GM10248 (cell line): ENCODE measurements at regions of chr1 and their contacts with region 1.

Region 1: DNA sequence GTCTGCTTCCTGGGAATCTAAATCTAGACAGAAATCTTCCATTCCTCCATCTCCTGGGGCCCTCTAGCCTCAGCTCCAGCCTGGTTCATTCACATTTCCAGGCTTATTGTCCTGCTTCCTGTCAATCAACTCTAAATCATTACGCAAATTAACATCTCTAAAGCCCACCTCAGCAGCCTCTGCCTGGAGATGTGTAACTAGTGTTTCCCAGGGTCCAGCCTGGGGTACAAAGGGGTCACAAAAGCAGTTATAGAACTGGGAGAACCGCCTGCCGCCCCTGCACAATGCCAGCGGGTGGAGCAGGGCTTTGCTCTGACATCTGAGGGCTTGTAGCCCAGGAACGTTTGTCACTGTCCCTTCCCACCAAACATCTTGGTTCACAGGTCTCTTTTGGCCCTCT is 373.5 kb downstream of the RRAGC start:
- DNase-seq: no peak
- CTCF ChIP-seq: no peak

Region 2: GRCh38 chr1:38474738-38475623 is 11.1 kb before region 1 on chr1:
- CTCF ChIA-PET with region 1: interaction called, 16 read pairs
- POLR2A ChIA-PET with region 1: no interaction called
- DNase-seq: peak; percentile 79
- CTCF ChIP-seq: no peak

Region 3: GRCh38 chr1:38500352-38500751 is 14.3 kb after region 1 on chr1:
- CTCF ChIA-PET with region 1: interaction called, 14 read pairs
- POLR2A ChIA-PET with region 1: interaction called, 3 read pairs
- DNase-seq: no peak
- CTCF ChIP-seq: no peak